Sigmoid colon (tissue), 7 donors: ENCODE measurements at regions of chr2 and their contacts with region 1.

Region 1: DNA sequence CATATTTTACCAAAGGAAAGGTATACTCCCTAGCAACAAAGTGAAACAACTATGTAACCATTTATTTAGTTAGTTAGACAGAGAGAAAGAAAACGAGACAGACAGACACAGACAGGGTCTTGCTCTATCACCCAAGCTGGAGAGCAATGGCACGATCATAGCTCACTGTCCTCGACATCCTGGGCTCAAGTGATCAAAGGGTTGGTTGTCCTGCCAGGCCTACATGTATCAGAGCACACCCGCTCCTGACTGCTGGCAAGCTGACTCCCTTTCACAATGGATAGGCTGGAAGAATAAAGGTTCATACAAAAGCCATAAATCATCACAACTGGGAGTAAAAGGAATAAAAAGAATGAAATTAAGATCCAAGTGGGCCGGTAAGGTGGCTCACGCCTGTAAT is 53.5 kb downstream of the ATL2 start:
- DNase-seq: no peak
- H3K4me3 ChIP-seq: no peak overlapping the region
- H3K27ac ChIP-seq: peak overlapping the region in 3 of 4 donors; percentile 5 to 58 (median 33)
- H3K4me1 ChIP-seq: peaks cover 0 to 57% (median 30%) of the 10 kb centered on the region in 4 donors
- H3K27me3 ChIP-seq: no peaks in the 10 kb centered on the region
- CTCF ChIP-seq: no peak
- EP300 ChIP-seq: no peak
- POLR2A ChIP-seq: no peak

Region 2: GRCh38 chr2:38359421-38359820 is 35.8 kb after region 1 on chr2:
- intact Hi-C with region 1: loop called (anchors 5 kb)
- DNase-seq: no peak
- H3K4me3 ChIP-seq: no peak overlapping the region
- H3K27ac ChIP-seq: peak overlapping the region in 2 of 4 donors; percentile 9 to 54
- H3K4me1 ChIP-seq: peaks cover 0 to 57% (median 39%) of the 10 kb centered on the region in 4 donors
- H3K27me3 ChIP-seq: no peaks in the 10 kb centered on the region
- CTCF ChIP-seq: no peak
- EP300 ChIP-seq: no peak
- POLR2A ChIP-seq: no peak

Region 3: DNA sequence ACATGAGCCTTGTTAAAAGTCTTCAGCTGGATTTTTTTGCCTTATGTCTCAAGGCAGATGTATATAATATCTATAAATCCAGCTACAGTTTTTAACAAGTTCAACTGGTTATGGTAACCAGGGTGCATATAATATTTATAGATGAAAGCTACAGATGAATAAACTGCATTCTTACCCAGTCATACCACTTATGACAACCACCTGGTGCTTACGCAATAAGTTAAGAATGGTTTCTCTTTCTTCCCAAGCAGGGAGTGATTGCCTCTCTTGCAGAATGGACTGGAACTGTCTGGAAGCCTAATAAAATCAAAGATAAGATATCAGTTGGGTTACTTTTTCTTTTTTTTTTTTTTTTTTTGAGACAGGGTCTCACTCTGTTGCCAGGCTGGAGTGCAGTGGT is 532.5 kb after region 1 on chr2:
- intact Hi-C with region 1: no loop called
- DNase-seq: no peak
- H3K4me3 ChIP-seq: no peak overlapping the region
- H3K27ac ChIP-seq: no peak overlapping the region
- H3K4me1 ChIP-seq: no peaks in the 10 kb centered on the region
- H3K27me3 ChIP-seq: no peaks in the 10 kb centered on the region
- CTCF ChIP-seq: no peak
- EP300 ChIP-seq: no peak
- POLR2A ChIP-seq: no peak